H1 (cell line): ENCODE measurements at regions of chr17 and their contacts with region 1.

Region 1: DNA sequence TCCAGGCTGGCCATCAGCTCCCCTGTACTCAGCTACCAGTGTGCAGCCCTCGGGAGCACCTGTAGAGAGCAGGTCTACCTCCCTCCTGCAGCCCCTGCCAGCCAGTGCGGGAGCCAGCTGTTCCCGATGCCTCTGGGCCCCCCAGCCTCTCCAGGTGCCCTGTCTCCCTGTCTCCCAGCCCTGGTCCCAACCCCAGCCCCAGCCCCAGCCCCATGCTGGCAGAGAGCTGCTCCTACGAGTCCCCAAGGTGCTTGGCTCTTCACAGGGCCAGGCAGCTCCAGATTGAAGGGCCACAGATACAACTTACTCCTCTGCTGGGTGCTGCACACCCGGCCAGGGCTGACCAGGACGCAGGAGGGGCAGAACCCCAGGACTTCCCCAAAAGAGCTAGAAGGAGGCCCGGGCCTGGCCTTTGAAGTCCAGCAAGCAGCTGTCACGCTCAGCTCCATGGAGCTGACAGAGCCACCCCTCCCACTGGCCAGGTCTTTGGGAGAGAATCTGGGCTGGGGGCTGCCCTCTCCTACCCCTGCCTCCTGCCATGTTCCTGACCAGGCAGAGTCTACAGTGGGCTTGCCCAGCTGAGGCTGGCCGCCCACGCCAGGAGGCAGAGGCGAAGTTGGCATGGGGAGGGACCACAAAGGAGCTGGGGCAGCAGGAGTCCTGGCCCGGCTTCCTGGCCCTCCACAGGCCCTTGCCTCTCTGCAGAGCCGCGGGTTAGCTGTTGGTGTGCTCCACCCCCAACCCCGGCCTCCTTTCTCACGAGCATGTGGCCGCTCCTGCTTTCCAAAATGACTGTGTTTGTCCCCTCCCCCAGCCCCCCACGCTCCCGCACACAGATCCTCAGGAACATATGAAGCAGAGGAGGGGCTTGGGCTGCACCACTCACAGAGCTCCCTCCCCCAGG is 9.5 kb upstream of the ADAM11 start:
- DNase-seq: no peak
- H3K4me3 ChIP-seq: no peak overlapping the region
- H3K27ac ChIP-seq: no peak overlapping the region
- H3K4me1 ChIP-seq: no peaks in the 10 kb centered on the region; a peak in 1 of 7 replicates
- H3K27me3 ChIP-seq: 0 out of 7 replicates have a peak, but pooled peaks cover 0 to 3% (median 0%) of the 10 kb centered on the region in 4 experiments
- CTCF ChIP-seq: no peak
- EP300 ChIP-seq: no peak
- POLR2A ChIP-seq: no peak
- RAD21 ChIP-seq: no peak

Region 2: DNA sequence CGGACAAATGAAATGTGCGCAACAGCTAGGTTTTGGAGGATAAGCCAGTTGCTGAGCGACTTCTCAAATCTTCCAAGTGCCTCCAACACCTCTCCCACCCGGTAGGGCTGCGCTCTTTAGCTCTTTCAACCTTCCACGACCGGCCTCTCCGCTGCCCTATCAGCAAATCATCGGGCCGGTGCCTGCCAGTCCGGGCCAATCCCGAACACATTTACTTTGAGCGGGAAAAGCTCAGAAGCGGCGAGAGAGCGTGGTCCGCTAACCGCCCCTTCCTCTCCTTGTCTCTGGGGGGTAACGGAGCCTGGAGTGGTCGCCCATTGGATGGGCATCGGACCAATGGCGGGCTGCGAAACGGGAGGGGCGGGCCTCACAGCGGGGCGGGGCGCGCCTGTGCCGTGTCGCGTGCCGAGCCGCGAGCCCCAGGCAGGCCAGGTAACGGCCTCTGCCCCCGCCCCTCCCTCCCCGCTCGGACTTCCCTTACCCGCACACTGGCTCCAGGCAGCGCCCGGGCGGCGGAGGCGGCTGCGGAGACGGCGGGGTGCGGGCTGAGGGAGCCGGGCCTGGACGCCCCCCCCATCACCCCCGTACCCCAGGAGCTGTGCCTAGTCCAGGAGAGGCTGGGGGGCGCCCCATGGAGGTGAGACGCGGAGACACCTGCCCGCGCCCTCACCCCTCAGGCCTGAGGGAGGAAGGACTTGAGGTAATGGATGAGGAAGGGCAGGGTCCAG is 93.2 kb before region 1 on chr17 and contains the start of gene MEIOC:
- CTCF ChIA-PET with region 1: no interaction called
- POLR2A ChIA-PET with region 1: no interaction called
- DNase-seq: peak; percentile 61 to 84
- H3K4me3 ChIP-seq: peak within 1 kb of the TSS; percentile 26 to 65 (median 44)
- H3K27ac ChIP-seq: no peak within 1 kb of the TSS
- H3K4me1 ChIP-seq: no peaks in the 10 kb centered on the region; a peak in 1 of 7 replicates
- H3K27me3 ChIP-seq: peaks cover 2 to 36% (median 27%) of the 10 kb centered on the region in 4 experiments
- CTCF ChIP-seq: peak; percentile 25 to 41 (median 28)
- EP300 ChIP-seq: no peak
- POLR2A ChIP-seq: no peak
- RAD21 ChIP-seq: no peak; a peak in 2 of 4 replicates
- total RNA-seq, gene MEIOC: 3.6 and 4.8 TPM in 2 replicates

Region 3: GRCh38 chr17:44733753-44734152 is 15.6 kb before region 1 on chr17:
- CTCF ChIA-PET with region 1: interaction called, 38 read pairs
- POLR2A ChIA-PET with region 1: interaction called, 7 read pairs
- DNase-seq: peak in 1 of 2 experiments; percentile 63
- H3K4me3 ChIP-seq: no peak overlapping the region
- H3K27ac ChIP-seq: no peak overlapping the region
- H3K4me1 ChIP-seq: peaks cover 2 to 6% (median 3%) of the 10 kb centered on the region in 4 experiments; a peak in 4 of 7 replicates
- H3K27me3 ChIP-seq: no peaks in the 10 kb centered on the region
- CTCF ChIP-seq: peak; percentile 63 to 80 (median 80)
- EP300 ChIP-seq: no peak
- POLR2A ChIP-seq: no peak
- RAD21 ChIP-seq: peak; percentile 64 to 76